CD4-positive, alpha-beta T cell (primary cell): ENCODE measurements at regions of chr3 and their contacts with region 1.

Region 1: GRCh38 chr3:189355481-189356201 is 183.9 kb downstream of the TPRG1 start:
- DNase-seq: peak; percentile 14 to 80 (median 38)
- ATAC-seq: peak; percentile 83
- H3K4me3 ChIP-seq: peak overlapping the region; percentile 8
- H3K4me3 Mint-ChIP-seq: peak overlapping the region; percentile 52
- H3K27ac ChIP-seq: peak overlapping the region; percentile 13 to 48
- H3K27ac Mint-ChIP-seq: peak overlapping the region; percentile 90
- H3K4me1 ChIP-seq: peaks cover 19% of the 10 kb centered on the region
- H3K4me1 Mint-ChIP-seq: peaks cover 48% of the 10 kb centered on the region
- H3K27me3 ChIP-seq: no peaks in the 10 kb centered on the region
- H3K27me3 Mint-ChIP-seq: no peaks in the 10 kb centered on the region
- CTCF ChIP-seq: no peak

Region 2: GRCh38 chr3:189276481-189277219 is 79.0 kb before region 1 on chr3:
- CTCF ChIA-PET with region 1: interaction called, 12 read pairs
- POLR2A ChIA-PET with region 1: interaction called, 5 read pairs
- intact Hi-C with region 1: loop called in 1 of 2 experiments (anchors 5 kb)
- DNase-seq: peak in 1 of 14 experiments; percentile 18
- ATAC-seq: no peak
- H3K4me3 ChIP-seq: no peak overlapping the region
- H3K4me3 Mint-ChIP-seq: no peak overlapping the region
- H3K27ac ChIP-seq: no peak overlapping the region
- H3K27ac Mint-ChIP-seq: no peak overlapping the region
- H3K4me1 ChIP-seq: peaks cover 16% of the 10 kb centered on the region
- H3K4me1 Mint-ChIP-seq: peaks cover 49% of the 10 kb centered on the region
- H3K27me3 ChIP-seq: no peaks in the 10 kb centered on the region
- H3K27me3 Mint-ChIP-seq: no peaks in the 10 kb centered on the region
- CTCF ChIP-seq: no peak

Region 3: GRCh38 chr3:189331002-189331418 is 24.6 kb before region 1 on chr3:
- CTCF ChIA-PET with region 1: interaction called, 3 read pairs
- POLR2A ChIA-PET with region 1: interaction called, 21 read pairs
- intact Hi-C with region 1: loop called in 1 of 2 experiments (anchors 5 kb)
- DNase-seq: peak in 3 of 14 experiments; percentile 25 to 34 (median 34)
- ATAC-seq: peak; percentile 40
- H3K4me3 ChIP-seq: no peak overlapping the region
- H3K4me3 Mint-ChIP-seq: peak overlapping the region; percentile 26
- H3K27ac ChIP-seq: no peak overlapping the region
- H3K27ac Mint-ChIP-seq: peak overlapping the region; percentile 45
- H3K4me1 ChIP-seq: peaks cover 32% of the 10 kb centered on the region
- H3K4me1 Mint-ChIP-seq: peaks cover 69% of the 10 kb centered on the region
- H3K27me3 ChIP-seq: no peaks in the 10 kb centered on the region
- H3K27me3 Mint-ChIP-seq: no peaks in the 10 kb centered on the region
- CTCF ChIP-seq: no peak